Motor neuron (in vitro differentiated cells): ENCODE measurements at regions of chr7 and their contacts with region 1.

Region 1: DNA sequence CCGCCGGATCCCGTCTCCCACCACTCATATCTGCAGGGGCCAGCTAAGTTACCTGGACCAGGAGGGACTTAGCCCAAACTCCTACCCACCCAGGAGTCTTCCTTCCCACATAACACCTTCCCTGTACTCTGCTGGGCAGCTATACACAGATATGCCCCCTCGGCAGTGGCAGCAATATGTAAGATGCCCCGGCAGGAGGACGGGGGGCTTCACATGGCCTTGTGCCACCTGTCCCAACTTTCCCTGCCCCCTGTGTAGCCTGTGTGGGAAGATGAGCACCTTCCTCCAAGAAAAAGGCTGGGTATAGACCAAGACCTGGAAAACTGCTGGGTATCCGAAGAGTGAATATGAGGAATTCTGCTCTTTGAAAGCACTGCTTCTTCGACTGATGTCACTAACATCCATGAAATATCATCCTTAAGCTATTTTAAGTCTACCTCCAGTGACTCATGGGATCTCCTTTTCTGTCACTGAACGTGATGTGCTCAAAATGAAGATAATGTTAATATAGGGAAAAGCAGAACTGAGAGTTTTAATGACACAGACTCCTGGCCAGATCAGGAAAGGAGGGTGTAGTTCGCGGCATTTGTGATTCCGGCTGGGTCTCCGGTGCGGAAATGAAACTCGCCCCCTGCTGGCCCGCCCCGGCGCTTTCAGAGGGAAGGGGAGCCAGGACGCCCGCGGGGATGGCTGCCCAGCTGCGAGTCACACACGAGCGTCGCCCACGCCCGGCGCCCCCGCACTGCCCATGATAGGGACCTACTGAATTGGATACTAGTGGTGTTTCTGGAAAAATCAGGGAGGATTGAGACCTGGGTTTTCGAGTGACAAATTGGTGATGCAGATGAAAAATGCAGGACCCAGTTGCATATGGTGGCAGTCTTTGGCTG is 256.9 kb upstream of the NFE2L3 start:
- ATAC-seq: peak; percentile 70 to 92 (median 84)
- H3K4me3 ChIP-seq: peak overlapping the region in 1 of 5 donors; percentile 22
- H3K27ac ChIP-seq: no peak overlapping the region
- H3K4me1 ChIP-seq: peaks cover 2 to 12% of the 10 kb centered on the region in 2 donors

Region 2: GRCh38 chr7:26061688-26062150 is 166.6 kb after region 1 on chr7:
- in situ Hi-C with region 1: loop called in 1 of 9 experiments (anchors 10 kb)
- ATAC-seq: peak in 6 of 8 experiments; percentile 38 to 90 (median 69)
- H3K4me3 ChIP-seq: no peak overlapping the region
- H3K27ac ChIP-seq: no peak overlapping the region
- H3K4me1 ChIP-seq: peaks cover 5 to 10% of the 10 kb centered on the region in 2 donors

Region 3: DNA sequence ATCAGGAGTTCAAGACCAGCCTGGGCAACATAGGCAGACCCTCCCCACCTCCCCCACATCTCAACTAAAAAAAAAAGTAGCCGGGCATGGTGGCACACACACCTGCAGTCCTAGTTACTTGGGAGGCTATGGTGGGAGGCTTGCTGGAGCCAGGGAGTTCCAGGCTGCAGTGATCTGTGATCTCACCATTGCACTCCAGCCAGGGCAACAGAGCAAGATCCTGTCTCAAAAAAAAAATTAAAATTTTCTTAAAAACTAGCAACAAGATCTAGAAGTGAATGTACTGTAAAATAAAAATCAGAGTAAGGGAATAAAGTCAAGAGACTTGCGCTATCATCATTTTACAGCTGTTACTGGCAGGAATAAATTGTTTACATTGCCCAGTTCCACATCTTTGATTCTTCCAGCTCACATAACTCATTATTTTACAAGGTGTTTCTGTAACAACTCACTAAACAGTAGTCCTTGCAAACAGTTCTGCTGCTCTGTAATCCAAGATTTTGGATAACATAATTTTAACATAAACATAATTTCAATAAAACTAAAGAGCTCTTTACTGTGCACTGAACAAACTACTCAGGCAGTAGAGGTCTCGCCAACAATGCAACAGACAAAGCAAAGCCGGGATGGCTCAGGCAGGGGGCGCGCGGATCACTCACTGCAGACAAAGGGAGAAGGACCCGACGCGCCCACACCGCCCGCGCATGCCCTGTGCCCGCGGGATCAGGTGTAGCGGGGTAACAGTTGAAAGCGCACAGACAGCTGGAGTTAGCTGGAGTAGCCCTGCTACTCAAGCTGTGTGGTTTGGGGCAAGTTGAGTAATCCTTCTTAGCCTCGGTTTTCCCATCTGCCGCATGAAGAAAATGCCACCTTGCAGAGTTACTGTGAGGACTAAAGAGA is 183.5 kb after region 1 on chr7:
- in situ Hi-C with region 1: loop called in 1 of 9 experiments (anchors 10 kb)
- ATAC-seq: peak; percentile 78 to 100 (median 99)
- H3K4me3 ChIP-seq: peak overlapping the region in 2 of 5 donors; percentile 9 to 12
- H3K27ac ChIP-seq: no peak overlapping the region
- H3K4me1 ChIP-seq: peaks cover 12% of the 10 kb centered on the region in 2 donors

Region 4: GRCh38 chr7:26200444-26201246 is 305.5 kb after region 1 on chr7 and contains the start of gene HNRNPA2B1:
- in situ Hi-C with region 1: loop called in 3 of 9 experiments (anchors 25 kb)
- ATAC-seq: peak; percentile 57 to 75 (median 67)
- H3K4me3 ChIP-seq: peak within 1 kb of the TSS; percentile 76 to 99 (median 86)
- H3K27ac ChIP-seq: peak within 1 kb of the TSS; percentile 98 to 99
- H3K4me1 ChIP-seq: peaks cover 6 to 40% of the 10 kb centered on the region in 2 donors
- total RNA-seq, gene HNRNPA2B1: 173 to 834 (median 276) TPM

Region 5: GRCh38 chr7:26356929-26357798 is 462.0 kb after region 1 on chr7:
- in situ Hi-C with region 1: loop called in 8 of 9 experiments (anchors 10 to 25 kb)
- ATAC-seq: peak in 1 of 8 experiments; percentile 61
- H3K4me3 ChIP-seq: no peak overlapping the region
- H3K27ac ChIP-seq: no peak overlapping the region
- H3K4me1 ChIP-seq: peaks cover 0 to 19% of the 10 kb centered on the region in 2 donors

Region 6: GRCh38 chr7:26667500-26668133 is 772.5 kb after region 1 on chr7:
- in situ Hi-C with region 1: loop called in 8 of 9 experiments (anchors 25 kb)
- ATAC-seq: peak; percentile 87 to 100 (median 100)
- H3K4me3 ChIP-seq: no peak overlapping the region
- H3K27ac ChIP-seq: no peak overlapping the region
- H3K4me1 ChIP-seq: peaks cover 0 to 28% of the 10 kb centered on the region in 2 donors